ENCODE measurements at regions of chr11 and their contacts with region 1.

Region 1: DNA sequence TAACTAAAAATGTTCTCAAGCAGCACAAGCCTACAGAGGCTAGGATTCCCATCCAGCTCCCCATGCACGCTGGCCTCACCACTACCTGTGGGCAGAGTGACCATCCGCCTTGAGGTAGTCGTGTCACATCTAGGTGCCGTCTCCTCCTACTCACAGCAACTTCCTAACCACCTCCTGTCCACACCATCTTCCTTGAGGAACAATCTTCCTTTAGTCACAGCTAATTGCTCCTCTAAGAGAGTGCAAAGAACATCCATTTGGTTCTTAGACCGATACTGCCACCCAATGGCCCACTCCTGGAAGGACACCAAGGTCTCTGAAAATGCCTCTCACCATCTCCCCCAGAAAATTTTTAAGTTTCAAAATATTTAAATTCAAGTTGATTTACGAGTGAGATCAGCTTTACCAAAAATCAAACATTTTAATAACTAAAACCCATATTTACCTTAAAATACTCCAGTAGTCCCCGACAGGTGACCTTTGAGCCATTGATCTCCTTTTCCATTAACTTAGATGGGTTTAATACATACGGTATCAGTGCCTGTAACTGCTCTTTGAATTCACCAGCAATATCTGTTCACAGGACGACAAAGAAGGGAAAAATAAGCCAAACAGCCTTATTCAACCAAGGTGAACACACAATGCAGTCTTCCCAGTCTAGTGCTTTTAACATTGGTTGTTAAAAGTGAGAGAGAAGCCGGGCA is 21.7 kb upstream of the PLAAT3 start:
- DNase-seq: peak; percentile 51 to 66
- H3K4me3 ChIP-seq: no peak overlapping the region
- H3K27ac ChIP-seq: no peak overlapping the region
- H3K4me1 ChIP-seq: no peaks in the 10 kb centered on the region
- H3K27me3 ChIP-seq: no peaks in the 10 kb centered on the region
- CTCF ChIP-seq: peak; percentile 94

Region 2: GRCh38 chr11:62905927-62906531 is 729.9 kb before region 1 on chr11:
- CTCF ChIA-PET with region 1: no interaction called
- POLR2A ChIA-PET with region 1: no interaction called
- intact Hi-C with region 1: loop called (anchors 10 kb)
- DNase-seq: peak; percentile 69 to 82
- H3K4me3 ChIP-seq: no peak overlapping the region
- H3K27ac ChIP-seq: no peak overlapping the region
- H3K4me1 ChIP-seq: 0 out of 2 replicates have a peak, but pooled peaks cover 7% of the 10 kb centered on the region
- H3K27me3 ChIP-seq: peaks cover 62% of the 10 kb centered on the region
- CTCF ChIP-seq: peak; percentile 99

Region 3: GRCh38 chr11:63478896-63479295 is 157.0 kb before region 1 on chr11:
- CTCF ChIA-PET with region 1: interaction called, 13 read pairs
- POLR2A ChIA-PET with region 1: no interaction called
- intact Hi-C with region 1: loop called (anchors 1 kb)
- DNase-seq: peak; percentile 62 to 63
- H3K4me3 ChIP-seq: no peak overlapping the region
- H3K27ac ChIP-seq: no peak overlapping the region
- H3K4me1 ChIP-seq: no peaks in the 10 kb centered on the region
- H3K27me3 ChIP-seq: no peaks in the 10 kb centered on the region
- CTCF ChIP-seq: peak; percentile 99

Region 4: GRCh38 chr11:63553741-63554151 is 82.2 kb before region 1 on chr11:
- CTCF ChIA-PET with region 1: no interaction called
- POLR2A ChIA-PET with region 1: interaction called, 21 read pairs
- intact Hi-C with region 1: no loop called
- DNase-seq: no peak
- H3K4me3 ChIP-seq: no peak overlapping the region
- H3K27ac ChIP-seq: no peak overlapping the region
- H3K4me1 ChIP-seq: peaks cover 7% of the 10 kb centered on the region
- H3K27me3 ChIP-seq: no peaks in the 10 kb centered on the region
- CTCF ChIP-seq: no peak

Region 5: GRCh38 chr11:63738720-63739360 is 102.9 kb after region 1 on chr11:
- CTCF ChIA-PET with region 1: no interaction called
- POLR2A ChIA-PET with region 1: no interaction called
- intact Hi-C with region 1: loop called (anchors 5 kb)
- DNase-seq: peak; percentile 67 to 73
- H3K4me3 ChIP-seq: no peak overlapping the region
- H3K27ac ChIP-seq: peak overlapping the region; percentile 18; the same call in 1 of the 2 replicates
- H3K4me1 ChIP-seq: 0 out of 2 replicates have a peak, but pooled peaks cover 3% of the 10 kb centered on the region
- H3K27me3 ChIP-seq: no peaks in the 10 kb centered on the region
- CTCF ChIP-seq: peak; percentile 99

Region 6: DNA sequence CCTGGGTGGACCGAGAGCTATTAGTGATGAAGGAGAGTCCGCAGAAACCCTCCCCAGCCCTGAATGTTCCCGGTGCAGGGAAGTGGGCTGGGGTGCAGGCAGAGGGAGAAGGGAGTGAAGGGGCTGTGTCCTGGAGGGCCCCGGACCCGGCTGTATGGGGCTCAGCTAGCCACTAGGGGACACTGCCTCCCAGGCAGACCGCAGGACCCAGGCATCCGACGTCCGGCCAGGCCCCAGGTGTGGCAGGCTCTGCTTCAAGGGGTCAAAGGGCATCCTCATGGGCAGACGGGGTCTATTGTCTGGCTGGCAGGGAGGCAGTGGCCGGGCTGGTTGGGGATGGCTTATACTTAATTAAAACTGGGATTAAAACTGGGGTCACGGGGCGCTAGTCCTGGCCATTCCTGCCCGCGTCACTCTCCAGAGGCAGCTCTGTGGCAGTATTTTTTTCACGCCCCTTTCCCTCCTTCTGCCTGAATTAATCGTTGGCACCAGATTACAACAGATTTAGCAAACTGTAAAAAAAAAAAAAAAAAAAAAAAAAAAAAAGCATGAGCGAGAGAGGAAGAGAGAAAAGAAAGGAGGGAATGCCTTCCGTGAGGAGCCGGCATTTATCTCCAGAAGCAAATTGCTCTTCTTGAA is 404.9 kb after region 1 on chr11:
- CTCF ChIA-PET with region 1: no interaction called
- POLR2A ChIA-PET with region 1: no interaction called
- intact Hi-C with region 1: no loop called
- DNase-seq: no peak
- H3K4me3 ChIP-seq: no peak overlapping the region
- H3K27ac ChIP-seq: no peak overlapping the region
- H3K4me1 ChIP-seq: no peaks in the 10 kb centered on the region
- H3K27me3 ChIP-seq: no peaks in the 10 kb centered on the region
- CTCF ChIP-seq: peak; percentile 60

Measured in PC-9 (cell line).